ENCODE measurements at regions of chr9 and their contacts with region 1.

Region 1: GRCh38 chr9:78121488-78121887 is 89.9 kb upstream of the GNAQ start:
- DNase-seq: peak in 4 of 5 donors; percentile 3 to 33 (median 20)
- H3K4me3 ChIP-seq: no peak overlapping the region
- H3K4me3 Mint-ChIP-seq: no peak overlapping the region
- H3K27ac ChIP-seq: no peak overlapping the region
- H3K27ac Mint-ChIP-seq: peak overlapping the region in 1 of 8 donors; percentile 65
- H3K4me1 ChIP-seq: peaks cover 27% of the 10 kb centered on the region
- H3K4me1 Mint-ChIP-seq: peaks cover 28 to 41% (median 36%) of the 10 kb centered on the region in 3 donors
- H3K27me3 ChIP-seq: no peaks in the 10 kb centered on the region
- H3K27me3 Mint-ChIP-seq: peaks cover 2 to 6% of the 10 kb centered on the region in 2 donors

Region 2: DNA sequence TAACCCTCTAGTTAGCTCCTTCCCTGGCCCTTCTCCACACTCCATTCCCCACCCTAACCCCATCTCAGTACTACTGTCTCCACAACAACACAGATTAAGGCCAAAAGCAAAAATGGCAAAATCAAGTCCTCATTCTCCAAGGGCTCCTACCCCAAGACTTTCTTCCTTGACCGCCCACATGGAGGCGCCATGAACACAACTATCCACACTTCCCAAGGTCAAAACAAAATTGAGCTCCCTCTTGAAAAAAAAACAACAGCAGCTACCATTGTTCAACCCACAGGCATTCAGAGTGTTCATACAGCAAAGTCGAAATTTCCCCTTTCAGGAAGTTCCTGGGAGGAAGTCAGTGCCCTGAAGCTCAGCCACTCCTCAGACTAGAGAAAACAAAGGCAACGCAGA is 144.3 kb before region 1 on chr9:
- CTCF ChIA-PET with region 1: interaction called, 12 read pairs
- POLR2A ChIA-PET with region 1: interaction called, 3 read pairs
- DNase-seq: peak in 4 of 5 donors; percentile 15 to 59 (median 34)
- H3K4me3 ChIP-seq: peak overlapping the region; percentile 29
- H3K4me3 Mint-ChIP-seq: peak overlapping the region in 4 of 7 donors; percentile 1 to 25 (median 18)
- H3K27ac ChIP-seq: no peak overlapping the region
- H3K27ac Mint-ChIP-seq: peak overlapping the region; percentile 2 to 52 (median 38)
- H3K4me1 ChIP-seq: peaks cover 52% of the 10 kb centered on the region
- H3K4me1 Mint-ChIP-seq: peaks cover 46 to 59% (median 51%) of the 10 kb centered on the region in 3 donors
- H3K27me3 ChIP-seq: no peaks in the 10 kb centered on the region
- H3K27me3 Mint-ChIP-seq: no peaks in the 10 kb centered on the region

Region 3: DNA sequence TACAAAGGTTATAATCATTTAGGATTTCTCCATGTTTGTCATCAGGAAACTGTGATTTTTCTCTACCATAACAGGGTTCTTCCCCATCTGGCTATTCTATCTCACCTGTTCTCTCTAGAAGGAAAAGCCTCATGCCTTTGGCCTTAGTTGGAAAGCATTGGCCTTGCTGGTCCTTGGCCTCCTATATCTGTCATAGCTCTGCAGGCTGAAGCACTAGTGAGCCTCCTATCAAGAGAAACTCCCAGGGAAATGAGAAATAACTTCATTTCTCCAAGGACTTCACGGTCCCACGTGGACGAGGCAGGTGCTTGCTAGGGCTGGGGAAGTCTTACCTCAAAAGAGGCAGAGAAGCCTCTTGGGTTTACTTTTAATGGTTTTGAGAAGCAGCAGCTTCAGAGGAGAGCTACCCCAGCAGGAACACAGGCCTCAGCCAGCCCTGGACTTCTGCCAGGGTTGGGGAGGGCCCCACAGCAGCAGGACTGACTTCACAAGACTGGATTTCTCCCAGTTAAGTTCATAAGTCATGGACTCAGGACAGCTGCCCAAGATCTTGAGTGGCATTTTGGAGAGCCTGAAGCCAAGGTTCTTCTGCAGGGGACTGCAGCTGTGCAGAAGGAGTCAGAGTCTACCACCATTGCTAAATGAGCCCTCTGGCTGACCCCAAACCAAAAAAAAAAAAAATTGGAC is 159.6 kb after region 1 on chr9:
- CTCF ChIA-PET with region 1: no interaction called
- POLR2A ChIA-PET with region 1: no interaction called
- DNase-seq: no peak
- H3K4me3 ChIP-seq: no peak overlapping the region
- H3K4me3 Mint-ChIP-seq: no peak overlapping the region
- H3K27ac ChIP-seq: no peak overlapping the region
- H3K27ac Mint-ChIP-seq: no peak overlapping the region
- H3K4me1 ChIP-seq: no peaks in the 10 kb centered on the region
- H3K4me1 Mint-ChIP-seq: peaks cover 0 to 8% (median 0%) of the 10 kb centered on the region in 3 donors
- H3K27me3 ChIP-seq: no peaks in the 10 kb centered on the region
- H3K27me3 Mint-ChIP-seq: peaks cover 0 to under 1% of the 10 kb centered on the region in 2 donors